CD14-positive monocyte (primary cell): ENCODE measurements at regions of chr18 and their contacts with region 1.

Region 1: DNA sequence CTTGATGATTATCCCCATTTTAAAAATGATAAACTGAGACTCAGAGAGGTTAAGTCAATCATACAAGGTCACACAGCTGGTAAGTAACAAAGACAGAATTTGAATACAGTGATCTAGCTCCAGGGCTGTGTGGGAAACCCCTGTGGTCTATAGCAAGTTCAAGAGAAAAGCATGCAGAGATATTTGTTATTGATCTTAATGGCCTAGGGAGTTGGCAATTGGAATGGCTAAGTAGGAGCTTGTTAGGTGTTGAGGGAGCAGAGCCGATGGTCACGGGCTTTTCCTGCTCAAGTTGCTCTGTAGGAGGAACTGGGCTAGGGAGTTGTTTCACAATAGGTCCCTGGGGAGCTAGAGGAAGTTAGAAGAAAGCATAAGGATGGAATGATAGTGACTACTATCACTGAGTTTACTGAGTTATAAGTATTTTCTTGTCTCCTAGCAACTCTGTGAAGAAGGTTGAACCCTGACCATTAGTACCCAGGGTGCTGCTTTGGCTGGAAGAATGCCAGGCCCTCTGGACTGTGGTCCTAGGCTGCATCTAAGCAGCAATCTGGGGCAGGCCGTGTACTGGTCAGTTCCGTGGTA is 30.0 kb downstream of the RNF125 start:
- DNase-seq: peak; percentile 49 to 85 (median 85)
- H3K4me3 ChIP-seq: peak overlapping the region in 1 of 3 experiments; percentile 55
- H3K4me3 Mint-ChIP-seq: peak overlapping the region in 1 of 2 donors; percentile 81
- H3K27ac ChIP-seq: peak overlapping the region; percentile 90 to 95
- H3K27ac Mint-ChIP-seq: peak overlapping the region; percentile 83 to 98 (median 96)
- H3K4me1 ChIP-seq: peaks cover 50 to 62% of the 10 kb centered on the region in 2 donors
- H3K4me1 Mint-ChIP-seq: peaks cover 53% of the 10 kb centered on the region
- H3K27me3 ChIP-seq: no peaks in the 10 kb centered on the region
- H3K27me3 Mint-ChIP-seq: peaks cover 0 to 2% (median 0%) of the 10 kb centered on the region in 3 donors
- CTCF ChIP-seq: no peak

Region 2: DNA sequence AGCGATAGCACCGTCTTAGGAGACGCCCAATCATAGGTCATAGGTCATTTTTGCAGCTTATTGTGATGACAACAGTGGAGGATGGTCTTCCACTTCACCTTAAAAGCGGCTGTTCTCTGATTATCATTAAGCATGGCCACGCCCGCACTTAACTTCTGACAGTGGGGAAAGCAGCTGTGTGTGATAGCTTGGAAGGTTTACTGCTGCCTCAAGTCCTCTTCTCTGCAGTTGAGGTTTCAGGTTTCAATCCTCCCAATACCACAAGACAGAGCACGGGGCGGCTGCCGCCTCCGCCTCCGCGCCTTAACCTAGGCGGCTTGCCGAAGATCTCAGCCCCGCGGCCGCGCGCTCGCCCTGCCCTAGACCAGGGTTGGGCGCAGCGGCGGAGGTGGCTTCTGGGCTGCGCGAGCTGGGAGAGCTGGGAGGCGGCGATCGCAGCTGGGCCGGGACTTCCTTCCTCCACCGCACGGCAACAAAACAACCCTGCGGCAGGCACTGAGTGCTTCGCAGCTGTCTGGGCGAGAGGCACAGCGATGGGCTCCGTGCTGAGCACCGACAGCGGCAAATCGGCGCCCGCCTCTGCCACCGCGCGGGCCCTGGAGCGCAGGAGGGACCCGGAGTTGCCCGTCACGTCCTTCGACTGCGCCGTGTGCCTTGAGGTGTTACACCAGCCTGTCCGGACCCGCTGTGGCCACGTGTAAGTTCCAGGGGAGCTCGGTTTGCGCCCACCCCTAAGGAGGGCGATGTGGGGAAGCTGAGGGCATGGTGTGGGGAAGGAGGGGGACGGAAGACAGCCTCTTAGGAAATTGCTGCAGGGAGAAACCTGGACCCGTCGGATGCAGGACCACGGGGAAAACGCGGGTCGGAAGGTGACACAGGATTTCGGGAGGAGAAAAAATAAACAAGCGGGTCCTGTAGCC is 30.0 kb before region 1 on chr18 and contains the start of gene RNF125:
- intact Hi-C with region 1: loop called in 1 of 2 experiments (anchors 5 kb)
- DNase-seq: peak; percentile 68 to 72 (median 71)
- H3K4me3 ChIP-seq: peak within 1 kb of the TSS; percentile 71 to 96 (median 88)
- H3K4me3 Mint-ChIP-seq: peak within 1 kb of the TSS; percentile 99
- H3K27ac ChIP-seq: peak within 1 kb of the TSS; percentile 68 to 82
- H3K27ac Mint-ChIP-seq: peak within 1 kb of the TSS; percentile 83 to 92 (median 87)
- H3K4me1 ChIP-seq: peaks cover 21 to 33% of the 10 kb centered on the region in 2 donors
- H3K4me1 Mint-ChIP-seq: peaks cover 36% of the 10 kb centered on the region
- H3K27me3 ChIP-seq: no peaks in the 10 kb centered on the region
- H3K27me3 Mint-ChIP-seq: peaks cover 2 to 4% (median 2%) of the 10 kb centered on the region in 3 donors
- CTCF ChIP-seq: no peak
- polyA plus RNA-seq, gene RNF125: 17.3 to 29.2 (median 26.3) TPM

Region 3: DNA sequence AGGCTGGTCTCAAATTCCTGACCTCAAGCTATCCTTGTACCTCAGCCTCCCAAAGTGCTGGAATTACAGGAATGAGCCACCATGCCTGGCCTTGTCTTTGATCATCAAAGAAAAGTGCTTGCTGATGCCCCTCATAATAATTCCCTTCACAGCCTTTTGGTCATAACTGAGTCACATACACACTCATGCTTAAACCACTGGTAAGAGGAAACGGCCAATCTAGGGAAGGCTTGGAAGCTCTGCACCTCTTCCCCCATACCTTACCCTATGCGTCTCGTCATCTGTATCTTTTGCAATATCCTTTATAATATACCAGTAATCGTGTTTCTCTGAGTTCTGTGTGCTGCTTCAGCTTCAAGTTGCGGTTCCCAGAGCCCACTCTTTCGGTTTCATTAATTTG is 38.3 kb after region 1 on chr18:
- intact Hi-C with region 1: loop called (anchors 5 to 10 kb)
- DNase-seq: peak; percentile 81 to 93 (median 89)
- H3K4me3 ChIP-seq: peak overlapping the region in 1 of 3 experiments; percentile 73
- H3K4me3 Mint-ChIP-seq: no peak overlapping the region
- H3K27ac ChIP-seq: peak overlapping the region; percentile 81 to 91
- H3K27ac Mint-ChIP-seq: peak overlapping the region; percentile 97 to 99 (median 98)
- H3K4me1 ChIP-seq: peaks cover 54 to 66% of the 10 kb centered on the region in 2 donors
- H3K4me1 Mint-ChIP-seq: peaks cover 54% of the 10 kb centered on the region
- H3K27me3 ChIP-seq: no peaks in the 10 kb centered on the region
- H3K27me3 Mint-ChIP-seq: peaks cover 0 to 3% (median 1%) of the 10 kb centered on the region in 3 donors
- CTCF ChIP-seq: no peak

Region 4: GRCh38 chr18:32092422-32093101 is 44.0 kb after region 1 on chr18:
- intact Hi-C with region 1: loop called (anchors 5 to 10 kb)
- DNase-seq: peak; percentile 93 to 98 (median 95)
- H3K4me3 ChIP-seq: peak overlapping the region; percentile 88 to 96 (median 91)
- H3K4me3 Mint-ChIP-seq: peak overlapping the region; percentile 98 to 99
- H3K27ac ChIP-seq: peak overlapping the region; percentile 96 to 100
- H3K27ac Mint-ChIP-seq: peak overlapping the region; percentile 97 to 99 (median 99)
- H3K4me1 ChIP-seq: peaks cover 39 to 59% of the 10 kb centered on the region in 2 donors
- H3K4me1 Mint-ChIP-seq: peaks cover 42% of the 10 kb centered on the region
- H3K27me3 ChIP-seq: no peaks in the 10 kb centered on the region
- H3K27me3 Mint-ChIP-seq: peaks cover 0 to under 1% (median 0%) of the 10 kb centered on the region in 3 donors
- CTCF ChIP-seq: no peak

Region 5: DNA sequence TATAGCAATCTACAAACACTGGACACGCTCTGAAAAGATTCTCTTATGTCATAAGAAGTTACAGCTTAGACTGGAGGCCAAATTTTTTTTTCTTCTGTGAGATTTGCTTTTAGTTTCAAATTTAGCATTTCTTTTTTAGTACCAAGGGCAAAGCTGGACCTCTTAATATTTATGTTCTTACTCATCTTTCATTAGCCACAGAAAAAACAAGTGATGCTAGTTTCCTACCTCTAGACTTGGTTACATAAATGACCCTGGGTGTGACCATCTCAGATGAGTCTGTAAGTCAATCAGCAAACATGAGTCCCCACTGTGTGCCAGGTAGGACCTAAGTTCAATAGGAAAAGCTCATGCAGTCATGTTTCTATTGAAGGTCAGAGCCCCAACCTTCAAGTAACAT is 235.7 kb after region 1 on chr18:
- intact Hi-C with region 1: no loop called
- DNase-seq: no peak
- H3K4me3 ChIP-seq: no peak overlapping the region
- H3K4me3 Mint-ChIP-seq: no peak overlapping the region
- H3K27ac ChIP-seq: no peak overlapping the region
- H3K27ac Mint-ChIP-seq: no peak overlapping the region
- H3K4me1 ChIP-seq: no peaks in the 10 kb centered on the region
- H3K4me1 Mint-ChIP-seq: no peaks in the 10 kb centered on the region
- H3K27me3 ChIP-seq: no peaks in the 10 kb centered on the region
- H3K27me3 Mint-ChIP-seq: peaks cover 2 to 15% (median 5%) of the 10 kb centered on the region in 3 donors
- CTCF ChIP-seq: no peak